GM10248 (cell line): ENCODE measurements at regions of chr1 and their contacts with region 1.

Region 1: DNA sequence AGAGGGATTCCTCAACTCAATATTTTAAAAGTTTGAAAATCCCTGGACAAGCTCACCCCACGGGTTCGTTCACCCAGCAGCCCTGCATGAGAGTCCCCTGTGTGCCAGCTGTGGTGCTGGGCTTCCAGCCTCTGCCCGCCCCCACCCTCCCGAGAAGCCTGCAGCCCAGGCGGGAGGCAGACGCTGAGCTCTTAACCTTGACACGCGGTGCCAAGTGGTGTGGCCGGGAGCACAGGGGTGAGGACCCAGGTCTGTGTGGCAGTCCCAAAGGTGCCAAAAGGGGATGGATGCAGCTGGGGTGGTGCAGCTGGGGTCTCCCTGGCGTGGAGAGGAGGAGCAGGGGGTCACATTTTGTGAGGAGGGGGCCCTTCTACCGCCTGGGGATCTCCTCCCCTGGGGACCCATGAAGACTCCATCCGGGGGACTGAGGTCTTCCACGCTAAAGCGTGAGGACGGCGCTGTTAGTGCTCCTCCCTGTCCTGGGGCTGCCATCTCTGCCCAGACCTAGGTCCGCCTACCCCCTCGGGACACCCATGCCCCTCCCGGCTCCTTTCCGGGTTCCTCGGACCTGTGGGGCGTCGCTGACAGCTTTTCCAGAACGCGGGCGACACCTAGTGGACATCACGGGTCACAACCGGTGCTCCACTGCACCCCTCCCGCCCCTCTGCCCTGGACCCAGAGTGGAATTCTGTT is 12.9 kb downstream of the PLA2G2F start:
- DNase-seq: peak; percentile 92
- CTCF ChIP-seq: peak; percentile 83

Region 2: GRCh38 chr1:19882111-19883071 is 269.7 kb before region 1 on chr1 and contains the start of gene OTUD3:
- CTCF ChIA-PET with region 1: interaction called, 11 read pairs
- POLR2A ChIA-PET with region 1: no interaction called
- DNase-seq: peak; percentile 98
- CTCF ChIP-seq: peak; percentile 92

Region 3: GRCh38 chr1:19974822-19975416 is 177.1 kb before region 1 on chr1:
- CTCF ChIA-PET with region 1: interaction called, 13 read pairs
- POLR2A ChIA-PET with region 1: interaction called, 3 read pairs
- DNase-seq: peak; percentile 37
- CTCF ChIP-seq: peak; percentile 71

Region 4: GRCh38 chr1:20124456-20125057 is 27.5 kb before region 1 on chr1:
- CTCF ChIA-PET with region 1: interaction called, 34 read pairs
- POLR2A ChIA-PET with region 1: no interaction called
- DNase-seq: no peak
- CTCF ChIP-seq: no peak

Region 5: GRCh38 chr1:20178634-20179370 is 26.8 kb after region 1 on chr1:
- CTCF ChIA-PET with region 1: interaction called, 15 read pairs
- POLR2A ChIA-PET with region 1: no interaction called
- DNase-seq: no peak
- CTCF ChIP-seq: no peak

Region 6: DNA sequence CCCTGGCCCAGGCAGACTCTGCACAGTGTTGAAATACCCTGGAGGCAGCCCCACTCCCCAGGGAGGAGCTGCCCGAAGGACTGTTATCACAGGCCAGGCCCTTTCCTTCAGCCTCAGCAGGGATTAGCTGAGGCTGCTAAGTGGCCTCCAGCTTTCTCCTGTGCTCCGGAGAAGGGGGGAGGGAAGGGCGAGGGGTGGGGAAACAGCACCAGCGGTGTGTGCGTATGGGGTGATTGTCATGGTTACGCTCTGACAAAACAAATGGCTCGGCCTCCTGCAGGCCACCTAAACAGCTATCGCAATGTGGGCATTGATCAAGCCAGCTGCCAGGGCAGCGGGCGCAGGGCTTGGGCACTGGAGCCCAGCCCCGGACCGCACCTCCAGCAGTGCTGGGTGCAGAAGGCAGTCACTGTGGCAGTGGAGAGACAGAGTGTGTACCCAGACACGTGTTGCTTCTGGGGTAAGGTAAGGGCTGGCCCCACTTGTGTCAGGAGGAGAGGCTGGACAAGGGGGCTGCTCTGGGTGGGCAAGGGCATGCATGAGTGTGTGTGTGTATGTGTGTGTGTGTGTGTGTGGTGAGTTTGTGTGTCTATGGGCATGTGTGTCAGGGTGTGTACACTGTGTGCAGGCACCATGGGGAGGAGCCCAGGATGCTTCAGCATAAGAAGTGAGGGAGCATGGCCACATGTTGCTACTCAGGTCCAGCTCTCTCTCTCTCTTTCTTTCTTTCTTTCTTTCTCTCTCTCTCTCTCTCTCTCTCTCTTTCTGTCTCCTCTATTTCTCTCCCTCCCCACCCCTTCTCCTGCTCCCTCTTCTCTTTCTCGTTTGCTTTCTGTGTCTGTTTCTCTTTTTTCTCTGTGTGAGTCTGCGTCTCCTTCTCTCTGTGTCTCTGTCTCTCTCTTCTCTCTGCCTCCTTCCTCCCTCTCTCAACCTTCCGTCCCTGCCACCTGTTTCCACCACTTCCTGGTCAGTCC is 138.9 kb after region 1 on chr1 and contains the start of gene VWA5B1:
- CTCF ChIA-PET with region 1: no interaction called
- POLR2A ChIA-PET with region 1: no interaction called
- DNase-seq: no peak
- CTCF ChIP-seq: no peak

Region 7: GRCh38 chr1:20472860-20473711 is 321.0 kb after region 1 on chr1:
- CTCF ChIA-PET with region 1: no interaction called
- POLR2A ChIA-PET with region 1: no interaction called
- DNase-seq: peak; percentile 74
- CTCF ChIP-seq: no peak

Region 8: DNA sequence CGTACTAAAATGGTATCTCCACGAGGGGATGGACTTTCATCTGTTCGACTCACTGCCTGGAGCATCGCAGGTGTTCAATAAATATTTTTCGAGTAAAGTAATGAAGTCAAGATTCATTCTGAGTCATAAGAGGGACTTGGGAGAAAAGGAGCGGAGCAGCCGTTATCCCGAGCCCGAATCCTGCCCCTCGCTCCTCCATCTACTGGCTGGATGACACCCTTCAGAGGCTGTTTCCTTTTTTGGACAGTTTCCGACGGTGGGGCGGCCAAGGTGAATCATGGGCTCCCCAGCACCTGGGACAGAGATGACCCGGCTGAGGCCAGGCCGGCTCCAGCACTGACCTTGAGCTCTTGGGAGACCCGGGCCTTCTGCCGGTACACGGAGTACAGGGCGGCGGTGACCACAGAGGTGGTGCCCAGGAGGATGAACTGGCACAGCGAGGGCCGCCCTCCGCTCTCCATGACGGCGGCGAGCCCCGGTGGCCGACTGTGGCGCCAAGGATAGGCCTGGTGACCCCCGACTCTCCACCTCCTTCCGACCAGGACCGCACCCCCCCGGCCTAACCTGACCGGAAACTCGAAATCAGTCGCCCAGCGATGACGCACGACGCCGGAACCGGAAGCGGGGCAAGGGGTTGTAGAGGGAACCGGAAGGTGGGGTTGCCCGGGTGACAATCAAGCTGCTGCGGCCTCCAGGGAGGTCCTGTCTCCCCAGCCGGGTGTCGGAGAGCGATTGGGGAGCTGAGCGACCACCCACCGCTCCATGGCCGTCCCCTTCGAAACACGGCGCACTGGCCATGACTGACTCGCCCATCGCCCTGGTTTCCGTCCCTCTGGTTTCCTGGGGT is 355.7 kb after region 1 on chr1 and contains the start of gene MUL1:
- CTCF ChIA-PET with region 1: no interaction called
- POLR2A ChIA-PET with region 1: no interaction called
- DNase-seq: peak; percentile 97
- CTCF ChIP-seq: no peak